Naive thymus-derived CD4-positive, alpha-beta T cell (primary cell): ENCODE measurements at regions of chr16 and their contacts with region 1.

Region 1: GRCh38 chr16:31333686-31334649 is 21.0 kb upstream of the ITGAX start:
- DNase-seq: peak in 5 of 9 donors; percentile 25 to 47 (median 34)
- ATAC-seq: peak; percentile 87
- H3K4me3 ChIP-seq: no peak overlapping the region
- H3K4me3 Mint-ChIP-seq: peak overlapping the region in 1 of 10 donors; percentile 34
- H3K27ac ChIP-seq: peak overlapping the region; percentile 1
- H3K27ac Mint-ChIP-seq: peak overlapping the region in 7 of 9 donors; percentile 26 to 95 (median 48)
- H3K4me1 ChIP-seq: peaks cover 0 to 3% of the 10 kb centered on the region in 2 donors
- H3K4me1 Mint-ChIP-seq: peaks cover 16 to 48% (median 28%) of the 10 kb centered on the region in 7 donors
- H3K27me3 ChIP-seq: no peaks in the 10 kb centered on the region
- H3K27me3 Mint-ChIP-seq: peaks cover 0 to 17% (median 10%) of the 10 kb centered on the region in 5 donors

Region 2: GRCh38 chr16:30844671-30845449 is 489.1 kb before region 1 on chr16:
- CTCF ChIA-PET with region 1: no interaction called
- POLR2A ChIA-PET with region 1: no interaction called
- intact Hi-C with region 1: loop called in 1 of 2 experiments (anchors 5 kb)
- DNase-seq: peak; percentile 50 to 89 (median 83)
- ATAC-seq: peak; percentile 97
- H3K4me3 ChIP-seq: no peak overlapping the region
- H3K4me3 Mint-ChIP-seq: peak overlapping the region in 9 of 10 donors; percentile 22 to 67 (median 64)
- H3K27ac ChIP-seq: peak overlapping the region; percentile 1
- H3K27ac Mint-ChIP-seq: peak overlapping the region; percentile 2 to 82 (median 73)
- H3K4me1 ChIP-seq: peaks cover 0 to 5% of the 10 kb centered on the region in 2 donors
- H3K4me1 Mint-ChIP-seq: peaks cover 6 to 14% (median 8%) of the 10 kb centered on the region in 7 donors
- H3K27me3 ChIP-seq: no peaks in the 10 kb centered on the region
- H3K27me3 Mint-ChIP-seq: no peaks in the 10 kb centered on the region

Region 3: DNA sequence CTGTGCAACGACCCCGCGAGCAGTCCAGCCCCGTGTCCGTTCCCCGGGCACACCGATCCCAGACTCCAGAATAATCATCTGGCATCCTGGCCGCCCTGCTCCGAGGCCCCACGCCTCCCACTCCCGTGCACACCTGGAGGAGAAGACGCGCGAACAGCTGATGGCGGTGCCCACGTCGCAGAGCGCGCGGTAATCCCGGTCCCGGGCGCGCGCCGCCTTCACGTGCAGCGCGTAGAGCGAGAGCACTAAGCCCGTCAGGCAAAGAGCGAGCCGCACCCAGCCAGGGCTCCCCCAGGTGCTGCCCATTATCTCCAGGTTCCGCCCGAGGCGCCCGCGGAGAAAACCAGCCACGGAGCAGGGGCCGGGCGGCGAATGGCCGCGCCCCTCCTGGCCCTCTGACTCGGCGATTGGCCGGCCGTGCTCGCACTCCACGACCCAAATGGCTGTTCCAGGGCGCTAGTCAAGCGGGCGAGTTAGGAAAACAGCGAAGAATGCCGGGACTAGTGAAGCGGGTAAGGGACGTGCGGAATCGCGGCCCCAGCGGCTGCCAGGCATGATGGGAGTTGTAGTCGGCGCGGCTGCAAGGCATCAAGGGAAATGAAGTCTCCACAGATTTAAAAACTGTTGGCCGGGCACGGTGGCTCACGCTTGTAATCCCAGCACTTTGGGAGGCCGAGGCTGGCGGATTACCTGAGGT is 239.4 kb before region 1 on chr16 and contains the start of gene VKORC1:
- CTCF ChIA-PET with region 1: no interaction called
- POLR2A ChIA-PET with region 1: no interaction called
- intact Hi-C with region 1: loop called in 1 of 2 experiments (anchors 5 kb)
- DNase-seq: peak; percentile 66 to 89 (median 88)
- ATAC-seq: peak; percentile 93
- H3K4me3 ChIP-seq: peak within 1 kb of the TSS; percentile 99
- H3K4me3 Mint-ChIP-seq: peak within 1 kb of the TSS; percentile 92 to 99 (median 94)
- H3K27ac ChIP-seq: peak within 1 kb of the TSS; percentile 85
- H3K27ac Mint-ChIP-seq: peak within 1 kb of the TSS; percentile 67 to 95 (median 91)
- H3K4me1 ChIP-seq: peaks cover 14 to 18% of the 10 kb centered on the region in 2 donors
- H3K4me1 Mint-ChIP-seq: peaks cover 14 to 42% (median 29%) of the 10 kb centered on the region in 7 donors
- H3K27me3 ChIP-seq: no peaks in the 10 kb centered on the region
- H3K27me3 Mint-ChIP-seq: no peaks in the 10 kb centered on the region
- total RNA-seq, gene VKORC1: 29.5 to 69.3 (median 35.6) TPM

Region 4: DNA sequence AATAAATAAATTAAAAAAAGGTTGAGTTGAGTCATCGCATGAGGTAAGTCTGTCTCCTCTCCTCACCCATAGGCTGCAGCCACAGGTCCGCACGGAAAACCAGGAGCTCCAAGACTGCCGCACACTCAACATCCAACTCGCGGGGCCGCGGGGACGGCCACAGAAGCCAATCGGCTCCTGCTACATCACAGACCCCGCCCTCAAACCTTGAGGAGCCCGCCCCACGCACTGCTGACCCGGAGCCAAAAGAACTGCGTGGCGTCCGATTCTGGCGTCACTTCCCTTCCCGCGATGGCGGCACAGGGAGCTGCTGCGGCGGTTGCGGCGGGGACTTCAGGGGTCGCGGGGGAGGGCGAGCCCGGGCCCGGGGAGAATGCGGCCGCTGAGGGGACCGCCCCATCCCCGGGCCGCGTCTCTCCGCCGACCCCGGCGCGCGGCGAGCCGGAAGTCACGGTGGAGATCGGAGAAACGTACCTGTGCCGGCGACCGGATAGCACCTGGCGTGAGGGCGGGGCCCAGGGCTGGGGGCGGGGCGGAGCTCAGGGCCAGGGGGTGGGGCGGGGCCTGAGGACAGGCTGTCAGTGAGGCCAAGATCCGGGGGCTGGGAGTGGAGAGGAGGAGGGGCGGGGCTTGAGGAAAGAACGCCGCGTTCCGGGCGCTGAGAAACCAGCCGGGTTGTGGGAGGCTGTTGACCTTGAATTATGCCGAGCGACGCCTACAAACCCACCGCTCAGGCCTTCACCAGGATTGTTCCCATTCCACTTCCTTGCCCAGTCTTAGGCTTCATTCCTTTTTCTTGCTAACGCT is 216.4 kb before region 1 on chr16 and contains the start of gene KAT8:
- CTCF ChIA-PET with region 1: no interaction called
- POLR2A ChIA-PET with region 1: interaction called, 4 read pairs
- intact Hi-C with region 1: loop called in 1 of 2 experiments (anchors 5 kb)
- DNase-seq: peak; percentile 88 to 99 (median 97)
- ATAC-seq: peak; percentile 95
- H3K4me3 ChIP-seq: peak within 1 kb of the TSS; percentile 65
- H3K4me3 Mint-ChIP-seq: peak within 1 kb of the TSS; percentile 86 to 95 (median 90)
- H3K27ac ChIP-seq: peak within 1 kb of the TSS; percentile 98
- H3K27ac Mint-ChIP-seq: peak within 1 kb of the TSS; percentile 77 to 96 (median 89)
- H3K4me1 ChIP-seq: peaks cover 7 to 15% of the 10 kb centered on the region in 2 donors
- H3K4me1 Mint-ChIP-seq: peaks cover 12 to 32% (median 24%) of the 10 kb centered on the region in 7 donors
- H3K27me3 ChIP-seq: no peaks in the 10 kb centered on the region
- H3K27me3 Mint-ChIP-seq: no peaks in the 10 kb centered on the region
- total RNA-seq, gene KAT8: 63.0 to 134 (median 112) TPM

Region 5: DNA sequence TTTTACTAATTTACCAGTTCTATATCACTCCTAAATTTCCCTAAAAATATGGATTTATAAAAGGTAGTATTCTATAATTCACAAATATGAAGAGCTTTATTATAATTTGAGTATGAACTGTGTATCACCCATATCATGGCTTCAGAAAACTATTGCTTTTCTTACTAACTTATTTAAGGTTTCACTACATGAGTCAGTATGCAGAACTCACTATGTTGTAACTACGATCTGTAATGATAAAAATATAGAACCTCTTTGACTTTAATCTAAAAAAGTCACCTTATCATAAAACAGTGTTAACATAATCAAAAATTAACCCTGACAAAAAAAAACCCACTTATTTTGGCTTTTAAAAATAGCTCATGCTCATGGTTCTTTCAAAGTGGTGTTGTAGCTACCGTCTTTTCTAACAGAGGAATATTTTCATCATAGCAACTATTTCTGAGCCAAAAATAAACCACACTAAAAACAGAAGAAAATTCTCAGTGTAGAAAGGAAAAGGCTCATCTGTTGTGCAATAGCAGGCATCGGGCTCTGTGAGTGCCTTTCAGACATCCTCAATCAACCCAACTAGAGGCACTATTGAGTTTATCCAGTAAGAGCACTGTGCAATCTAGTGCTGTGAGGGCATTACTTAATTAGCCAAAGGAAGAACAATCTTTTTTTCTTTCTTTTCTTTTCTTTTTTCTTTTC is 32.1 kb before region 1 on chr16:
- CTCF ChIA-PET with region 1: interaction called, 10 read pairs
- POLR2A ChIA-PET with region 1: no interaction called
- intact Hi-C with region 1: no loop called
- DNase-seq: no peak
- ATAC-seq: peak; percentile 78
- H3K4me3 ChIP-seq: no peak overlapping the region
- H3K4me3 Mint-ChIP-seq: peak overlapping the region in 1 of 10 donors; percentile 17
- H3K27ac ChIP-seq: no peak overlapping the region
- H3K27ac Mint-ChIP-seq: no peak overlapping the region
- H3K4me1 ChIP-seq: no peaks in the 10 kb centered on the region
- H3K4me1 Mint-ChIP-seq: peaks cover 0 to 17% (median 6%) of the 10 kb centered on the region in 7 donors
- H3K27me3 ChIP-seq: no peaks in the 10 kb centered on the region
- H3K27me3 Mint-ChIP-seq: peaks cover 6 to 27% (median 16%) of the 10 kb centered on the region in 5 donors

Region 6: GRCh38 chr16:31440516-31441184 is 106.7 kb after region 1 on chr16:
- CTCF ChIA-PET with region 1: no interaction called
- POLR2A ChIA-PET with region 1: no interaction called
- intact Hi-C with region 1: loop called in 1 of 2 experiments (anchors 10 kb)
- DNase-seq: no peak
- ATAC-seq: no peak
- H3K4me3 ChIP-seq: no peak overlapping the region
- H3K4me3 Mint-ChIP-seq: peak overlapping the region in 1 of 10 donors; percentile 22
- H3K27ac ChIP-seq: no peak overlapping the region
- H3K27ac Mint-ChIP-seq: no peak overlapping the region
- H3K4me1 ChIP-seq: no peaks in the 10 kb centered on the region
- H3K4me1 Mint-ChIP-seq: peaks cover 0 to 23% (median 9%) of the 10 kb centered on the region in 7 donors
- H3K27me3 ChIP-seq: no peaks in the 10 kb centered on the region
- H3K27me3 Mint-ChIP-seq: peaks cover 0 to 3% (median 0%) of the 10 kb centered on the region in 5 donors